Naive thymus-derived CD8-positive, alpha-beta T cell (primary cell): ENCODE measurements at regions of chr5 and their contacts with region 1.

Region 1: DNA sequence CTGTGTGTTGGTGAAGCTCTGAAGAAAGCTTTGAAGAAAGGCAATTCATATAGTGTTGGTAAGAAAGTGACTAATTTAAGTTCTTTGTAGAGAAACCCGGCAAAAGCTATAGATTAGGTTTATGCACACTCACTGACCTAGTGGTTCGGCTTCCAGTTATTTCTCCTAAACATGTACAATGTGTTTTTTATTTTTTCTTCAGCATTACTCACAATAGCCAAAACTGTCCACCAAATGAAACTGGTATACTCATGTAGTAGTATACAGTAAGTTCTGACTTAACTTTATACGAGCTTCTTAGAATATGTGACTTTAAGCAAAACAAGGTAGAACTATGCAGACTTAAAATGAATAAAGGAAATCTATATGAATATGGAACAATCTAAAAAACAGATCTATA is 44.8 kb downstream of the PJA2 start:
- DNase-seq: no peak
- ATAC-seq: no peak
- H3K4me3 Mint-ChIP-seq: no peak overlapping the region
- H3K27ac Mint-ChIP-seq: peak overlapping the region in 3 of 10 donors; percentile 21 to 35 (median 23)
- H3K4me1 Mint-ChIP-seq: peaks cover 23 to 51% (median 30%) of the 10 kb centered on the region in 4 donors
- H3K27me3 Mint-ChIP-seq: no peaks in the 10 kb centered on the region

Region 2: GRCh38 chr5:109196486-109197160 is 168.4 kb before region 1 on chr5:
- POLR2A ChIA-PET with region 1: interaction called, 11 read pairs
- DNase-seq: no peak
- ATAC-seq: no peak
- H3K4me3 Mint-ChIP-seq: no peak overlapping the region
- H3K27ac Mint-ChIP-seq: no peak overlapping the region
- H3K4me1 Mint-ChIP-seq: no peaks in the 10 kb centered on the region
- H3K27me3 Mint-ChIP-seq: peaks cover 0 to 15% (median 2%) of the 10 kb centered on the region in 5 donors

Region 3: DNA sequence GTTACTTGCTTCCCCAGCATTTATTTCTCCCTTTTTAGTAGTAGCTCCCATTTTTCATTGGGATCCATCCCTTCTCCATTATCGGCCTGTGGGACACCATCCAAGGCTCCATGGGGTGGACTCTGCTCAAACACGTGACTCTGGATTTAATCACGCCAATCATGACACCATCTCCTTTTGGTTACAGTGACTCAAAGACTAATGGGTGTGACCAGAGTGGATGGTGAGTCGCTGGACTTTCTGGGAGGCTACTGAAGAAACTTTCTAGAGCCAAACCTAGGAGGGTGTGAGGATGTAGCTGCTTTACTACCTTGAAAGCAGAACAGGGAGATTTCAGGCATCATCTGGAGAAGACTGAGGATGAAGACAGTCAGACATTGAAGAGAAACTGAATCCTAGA is 48.3 kb before region 1 on chr5:
- POLR2A ChIA-PET with region 1: no interaction called
- DNase-seq: no peak
- ATAC-seq: no peak
- H3K4me3 Mint-ChIP-seq: no peak overlapping the region
- H3K27ac Mint-ChIP-seq: no peak overlapping the region
- H3K4me1 Mint-ChIP-seq: peaks cover 0 to 4% (median 2%) of the 10 kb centered on the region in 4 donors
- H3K27me3 Mint-ChIP-seq: no peaks in the 10 kb centered on the region